ENCODE measurements at regions of chr11 and their contacts with region 1.

Region 1: DNA sequence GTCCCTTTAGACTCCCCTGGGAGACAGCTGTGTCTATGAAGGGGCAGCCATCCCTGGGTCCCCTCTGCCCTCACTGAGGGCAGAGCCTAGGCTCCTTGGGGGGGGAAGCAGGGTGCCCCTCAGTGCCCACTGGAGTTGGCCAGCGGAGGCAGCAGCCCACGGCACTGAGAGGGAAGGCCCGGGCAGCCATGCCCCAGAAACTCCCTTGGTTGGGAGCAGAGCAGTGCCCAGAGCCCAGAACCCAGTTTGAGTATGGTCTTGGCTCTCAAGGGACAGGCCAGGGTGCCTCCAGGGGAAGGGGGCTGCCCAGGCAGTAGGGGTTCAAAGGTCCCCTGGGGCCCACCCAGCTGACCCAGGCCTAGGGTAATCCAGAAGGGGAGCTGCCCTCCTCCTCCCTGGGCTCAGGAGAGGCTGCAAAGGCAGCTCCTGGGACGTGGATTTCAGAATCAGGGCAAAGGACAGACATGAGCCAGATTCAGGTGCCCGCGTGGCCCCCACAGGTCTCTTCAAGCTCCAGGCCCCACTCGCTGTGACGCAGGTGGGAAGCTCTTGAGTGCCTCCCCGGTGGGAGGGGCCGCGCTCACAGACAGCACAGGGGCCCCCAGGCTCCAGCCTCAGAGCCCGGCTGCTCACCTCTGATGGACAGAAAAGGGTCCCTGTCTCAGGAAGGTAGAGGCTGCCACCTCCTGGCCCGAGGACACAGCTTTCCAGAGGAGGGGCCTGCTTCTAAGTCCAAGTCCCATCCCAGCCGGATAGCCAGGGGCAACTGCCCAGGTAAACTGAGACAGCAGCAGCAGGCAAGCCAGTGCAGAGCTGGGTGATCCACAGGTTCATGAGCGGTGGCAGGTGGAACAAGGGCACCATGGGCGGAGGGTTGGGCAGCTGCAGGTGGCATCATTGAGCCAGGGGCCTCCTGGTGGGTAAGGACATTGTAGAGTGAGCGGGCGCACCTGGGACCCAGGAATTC is 2.6 kb downstream of the C11orf21 start:
- DNase-seq: peak in 9 of 10 donors; percentile 46 to 86 (median 71)
- ATAC-seq: peak; percentile 59 to 61
- H3K4me3 Mint-ChIP-seq: peak overlapping the region; percentile 83 to 98 (median 95)
- H3K27ac Mint-ChIP-seq: peak overlapping the region; percentile 85 to 98 (median 94)
- H3K4me1 Mint-ChIP-seq: peaks cover 28 to 72% (median 62%) of the 10 kb centered on the region in 4 donors
- H3K27me3 Mint-ChIP-seq: no peaks in the 10 kb centered on the region

Region 2: GRCh38 chr11:2196970-2197770 is 101.9 kb before region 1 on chr11:
- POLR2A ChIA-PET with region 1: interaction called, 10 read pairs
- DNase-seq: peak; percentile 44 to 86 (median 66)
- ATAC-seq: peak; percentile 93 to 98
- H3K4me3 Mint-ChIP-seq: peak overlapping the region in 1 of 10 donors; percentile 39
- H3K27ac Mint-ChIP-seq: peak overlapping the region in 3 of 10 donors; percentile 6 to 60 (median 17)
- H3K4me1 Mint-ChIP-seq: peaks cover 11 to 16% (median 16%) of the 10 kb centered on the region in 4 donors
- H3K27me3 Mint-ChIP-seq: peaks cover 0 to 18% (median 4%) of the 10 kb centered on the region in 5 donors

Region 3: GRCh38 chr11:2314525-2315394 is 15.7 kb after region 1 on chr11:
- POLR2A ChIA-PET with region 1: interaction called, 112 read pairs
- DNase-seq: peak in 1 of 10 donors; percentile 19
- ATAC-seq: peak in 1 of 2 donors; percentile 13
- H3K4me3 Mint-ChIP-seq: peak overlapping the region in 2 of 10 donors; percentile 18 to 39
- H3K27ac Mint-ChIP-seq: peak overlapping the region in 8 of 10 donors; percentile 28 to 90 (median 68)
- H3K4me1 Mint-ChIP-seq: peaks cover 22 to 58% (median 42%) of the 10 kb centered on the region in 4 donors
- H3K27me3 Mint-ChIP-seq: no peaks in the 10 kb centered on the region

Measured in naive thymus-derived CD8-positive, alpha-beta T cell (primary cell).